CD8-positive, alpha-beta memory T cell (primary cell): ENCODE measurements at regions of chr19 and their contacts with region 1.

Region 1: DNA sequence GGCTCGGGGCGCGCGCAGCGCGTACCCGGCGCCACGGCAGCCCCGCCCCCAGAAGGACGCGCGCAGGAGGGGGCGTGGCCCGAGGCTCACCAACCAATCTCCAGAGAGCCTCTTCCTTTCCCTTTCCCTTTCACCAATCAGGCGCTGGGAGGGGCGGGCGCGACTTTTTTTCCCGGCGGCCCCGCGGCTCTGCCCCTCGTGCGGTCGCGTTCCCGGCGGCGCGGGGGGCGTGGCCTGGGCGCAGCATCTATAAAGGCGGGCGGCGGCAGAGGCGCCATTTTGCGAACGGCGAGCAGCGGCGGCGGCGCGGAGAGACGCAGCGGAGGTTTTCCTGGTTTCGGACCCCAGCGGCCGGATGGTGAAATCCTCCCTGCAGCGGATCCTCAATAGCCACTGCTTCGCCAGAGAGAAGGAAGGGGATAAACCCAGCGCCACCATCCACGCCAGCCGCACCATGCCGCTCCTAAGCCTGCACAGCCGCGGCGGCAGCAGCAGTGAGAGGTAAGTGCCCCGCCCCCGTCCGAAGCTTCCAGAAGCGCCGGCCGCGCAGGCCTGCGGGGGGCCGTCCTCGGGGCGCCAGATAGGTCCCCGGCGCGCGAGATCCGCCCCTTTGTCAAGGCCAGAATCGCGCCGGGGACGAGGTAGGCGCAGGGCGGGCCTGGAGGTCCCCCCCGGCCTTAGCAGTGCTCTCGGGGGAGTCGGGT is 12.6 kb downstream of the PEAK3 start:
- DNase-seq: peak; percentile 97 to 100 (median 99)
- H3K4me3 ChIP-seq: peak overlapping the region; percentile 86
- H3K4me3 Mint-ChIP-seq: peak overlapping the region; percentile 84 to 99 (median 92)
- H3K27ac ChIP-seq: peak overlapping the region; percentile 89
- H3K27ac Mint-ChIP-seq: peak overlapping the region; percentile 86 to 98 (median 90)
- H3K4me1 ChIP-seq: peaks cover 41% of the 10 kb centered on the region
- H3K4me1 Mint-ChIP-seq: peaks cover 27 to 43% (median 28%) of the 10 kb centered on the region in 3 donors
- H3K27me3 ChIP-seq: no peaks in the 10 kb centered on the region
- H3K27me3 Mint-ChIP-seq: peaks cover 0 to 7% of the 10 kb centered on the region in 2 donors

Region 2: DNA sequence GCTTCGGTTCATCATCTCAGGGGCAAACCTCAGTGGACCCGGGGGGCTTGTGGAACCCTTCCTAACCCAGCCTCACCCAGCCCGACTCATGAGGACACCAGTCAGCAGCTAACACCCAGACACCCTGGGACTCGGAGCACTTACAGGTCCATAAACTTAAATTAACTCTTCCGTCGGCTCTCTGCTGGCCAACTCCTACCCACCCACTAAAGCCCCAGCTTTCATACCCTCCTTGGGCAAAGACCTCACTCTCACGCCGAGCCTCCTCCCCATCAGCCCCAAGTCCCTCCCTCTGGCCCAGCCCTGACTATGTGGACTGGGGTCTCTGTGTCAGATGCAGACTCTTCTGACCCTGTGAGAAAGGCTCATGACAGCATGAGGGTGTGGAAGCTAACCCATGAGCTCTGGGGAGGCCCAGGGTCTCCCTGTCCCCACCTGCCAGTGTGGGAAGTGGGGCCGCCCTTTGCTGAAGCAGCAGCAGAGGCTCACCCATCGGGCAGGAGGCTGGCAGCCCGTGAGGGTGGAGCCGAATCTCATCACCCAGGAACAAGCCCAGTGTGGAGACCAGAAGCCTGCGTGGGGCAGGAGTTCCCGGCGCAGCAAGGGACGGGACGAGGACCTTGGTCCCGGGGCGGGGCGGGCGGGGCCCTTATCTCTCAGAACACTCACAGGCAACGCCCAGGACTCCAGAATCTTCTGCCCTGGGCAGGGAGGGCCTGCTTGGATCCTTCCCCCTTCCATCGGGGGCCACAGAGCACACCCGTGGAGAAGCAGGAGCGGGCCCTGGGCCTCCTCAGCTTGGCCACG is 636.7 kb before region 1 on chr19:
- CTCF ChIA-PET with region 1: no interaction called
- POLR2A ChIA-PET with region 1: no interaction called
- DNase-seq: no peak
- H3K4me3 ChIP-seq: no peak overlapping the region
- H3K4me3 Mint-ChIP-seq: no peak overlapping the region
- H3K27ac ChIP-seq: peak overlapping the region; percentile 24
- H3K27ac Mint-ChIP-seq: no peak overlapping the region
- H3K4me1 ChIP-seq: no peaks in the 10 kb centered on the region
- H3K4me1 Mint-ChIP-seq: peaks cover 0 to 3% (median 0%) of the 10 kb centered on the region in 3 donors
- H3K27me3 ChIP-seq: no peaks in the 10 kb centered on the region
- H3K27me3 Mint-ChIP-seq: no peaks in the 10 kb centered on the region

Region 3: GRCh38 chr19:2151339-2152229 is 117.8 kb before region 1 on chr19 and contains the start of gene AP3D1:
- CTCF ChIA-PET with region 1: interaction called, 12 read pairs
- POLR2A ChIA-PET with region 1: interaction called, 5 read pairs
- DNase-seq: peak; percentile 100
- H3K4me3 ChIP-seq: peak within 1 kb of the TSS; percentile 74
- H3K4me3 Mint-ChIP-seq: peak within 1 kb of the TSS; percentile 76 to 96 (median 89)
- H3K27ac ChIP-seq: peak within 1 kb of the TSS; percentile 86
- H3K27ac Mint-ChIP-seq: peak within 1 kb of the TSS; percentile 81 to 97 (median 96)
- H3K4me1 ChIP-seq: peaks cover 30% of the 10 kb centered on the region
- H3K4me1 Mint-ChIP-seq: peaks cover 32 to 39% (median 38%) of the 10 kb centered on the region in 3 donors
- H3K27me3 ChIP-seq: no peaks in the 10 kb centered on the region
- H3K27me3 Mint-ChIP-seq: peaks cover 0 to 3% of the 10 kb centered on the region in 2 donors
- total RNA-seq, gene AP3D1: 96.5 to 99.2 TPM

Region 4: DNA sequence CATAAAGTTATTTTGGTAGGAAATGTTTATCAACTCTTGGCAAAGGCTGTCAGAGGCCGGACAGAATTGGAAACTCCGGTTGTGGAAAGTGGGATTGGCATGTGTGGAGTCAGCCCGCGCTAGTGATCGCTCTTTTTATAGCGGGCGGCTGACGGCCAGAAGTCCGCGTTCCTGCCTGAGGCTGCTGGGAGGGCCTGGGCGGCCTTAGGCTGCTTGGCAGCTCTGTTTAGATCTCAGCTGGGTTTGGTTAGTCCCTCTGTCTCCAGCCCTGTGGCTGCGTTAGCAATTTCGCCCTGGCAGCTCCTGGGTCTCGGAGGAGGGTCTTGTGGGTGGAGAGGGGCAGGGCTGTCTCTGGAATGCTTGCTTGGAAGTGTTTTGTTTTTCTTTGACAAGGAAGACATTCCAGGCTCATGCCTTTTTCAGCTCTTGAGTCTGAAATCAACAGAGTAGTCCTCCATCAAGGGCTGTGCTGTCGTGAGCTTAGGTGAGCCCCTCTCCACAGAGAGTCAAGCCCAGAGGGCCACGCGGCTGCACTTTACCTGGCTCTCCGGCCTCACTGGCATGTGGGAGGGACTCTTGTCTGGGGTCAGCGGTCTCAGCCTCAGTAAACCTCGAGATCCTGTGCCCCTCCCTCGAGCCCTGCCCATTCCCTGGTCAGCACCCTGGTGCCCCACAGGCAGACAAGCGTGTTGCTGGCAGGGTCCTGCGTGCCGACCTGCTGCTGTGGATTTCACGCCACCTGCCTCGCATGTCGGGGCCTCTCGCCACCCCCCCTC is 83.1 kb before region 1 on chr19:
- CTCF ChIA-PET with region 1: no interaction called
- POLR2A ChIA-PET with region 1: no interaction called
- DNase-seq: no peak
- H3K4me3 ChIP-seq: no peak overlapping the region
- H3K4me3 Mint-ChIP-seq: no peak overlapping the region
- H3K27ac ChIP-seq: no peak overlapping the region
- H3K27ac Mint-ChIP-seq: no peak overlapping the region
- H3K4me1 ChIP-seq: no peaks in the 10 kb centered on the region
- H3K4me1 Mint-ChIP-seq: peaks cover 2 to 14% (median 4%) of the 10 kb centered on the region in 3 donors
- H3K27me3 ChIP-seq: no peaks in the 10 kb centered on the region
- H3K27me3 Mint-ChIP-seq: no peaks in the 10 kb centered on the region

Region 5: DNA sequence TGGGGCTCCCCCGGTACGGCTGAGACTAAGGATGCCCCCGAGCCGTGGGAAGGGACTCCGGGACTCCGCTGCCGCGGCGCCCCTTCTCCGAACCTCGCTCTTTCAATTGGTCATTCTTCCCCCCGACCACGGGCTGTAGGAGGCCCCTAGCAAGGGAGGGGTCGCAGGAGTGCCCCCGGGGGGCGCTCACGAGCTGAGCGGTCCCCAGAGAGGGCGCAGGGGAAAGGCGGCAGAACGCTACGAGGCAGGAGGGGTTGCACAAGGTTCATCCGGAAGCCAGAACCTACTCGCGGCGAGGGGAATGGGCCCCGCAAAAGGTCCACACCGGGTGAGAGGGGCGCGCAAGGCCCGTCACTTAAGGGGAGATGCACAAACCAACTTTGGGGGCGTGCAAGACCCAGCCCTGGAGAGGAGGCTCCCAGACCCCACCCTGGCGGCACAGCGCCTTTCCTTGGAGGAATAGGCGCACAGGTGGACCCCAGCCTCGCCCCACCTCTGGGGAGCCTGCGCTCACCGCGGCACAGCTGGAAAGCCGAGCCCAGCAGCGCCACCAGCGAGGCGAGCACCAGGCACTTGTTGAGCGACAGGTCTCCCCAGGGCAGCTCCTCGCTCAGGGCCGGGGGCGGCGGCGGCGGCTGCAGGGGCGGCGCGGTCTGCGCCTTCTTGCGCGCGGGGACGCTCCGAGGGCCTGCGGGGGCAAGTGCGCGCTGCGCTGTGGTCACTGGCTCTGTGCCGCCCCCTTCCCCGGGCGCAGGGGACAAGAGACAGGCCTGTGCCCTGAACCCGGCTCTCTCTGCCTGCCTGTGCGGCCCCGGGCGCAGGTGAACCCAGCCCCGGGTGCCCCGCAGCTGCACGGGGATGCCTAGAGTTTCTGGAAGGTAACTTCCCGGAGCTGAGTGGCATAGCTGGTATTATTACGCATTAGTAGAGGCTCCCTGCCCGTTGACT is 16.0 kb before region 1 on chr19:
- CTCF ChIA-PET with region 1: interaction called, 61 read pairs
- POLR2A ChIA-PET with region 1: interaction called, 73 read pairs
- DNase-seq: peak in 3 of 5 donors; percentile 60 to 71 (median 67)
- H3K4me3 ChIP-seq: peak overlapping the region; percentile 58
- H3K4me3 Mint-ChIP-seq: peak overlapping the region; percentile 72 to 90 (median 79)
- H3K27ac ChIP-seq: no peak overlapping the region
- H3K27ac Mint-ChIP-seq: peak overlapping the region in 6 of 8 donors; percentile 27 to 77 (median 50)
- H3K4me1 ChIP-seq: peaks cover 30% of the 10 kb centered on the region
- H3K4me1 Mint-ChIP-seq: peaks cover 7 to 37% (median 10%) of the 10 kb centered on the region in 3 donors
- H3K27me3 ChIP-seq: peaks cover 10% of the 10 kb centered on the region
- H3K27me3 Mint-ChIP-seq: peaks cover 0 to 2% of the 10 kb centered on the region in 2 donors

Region 6: DNA sequence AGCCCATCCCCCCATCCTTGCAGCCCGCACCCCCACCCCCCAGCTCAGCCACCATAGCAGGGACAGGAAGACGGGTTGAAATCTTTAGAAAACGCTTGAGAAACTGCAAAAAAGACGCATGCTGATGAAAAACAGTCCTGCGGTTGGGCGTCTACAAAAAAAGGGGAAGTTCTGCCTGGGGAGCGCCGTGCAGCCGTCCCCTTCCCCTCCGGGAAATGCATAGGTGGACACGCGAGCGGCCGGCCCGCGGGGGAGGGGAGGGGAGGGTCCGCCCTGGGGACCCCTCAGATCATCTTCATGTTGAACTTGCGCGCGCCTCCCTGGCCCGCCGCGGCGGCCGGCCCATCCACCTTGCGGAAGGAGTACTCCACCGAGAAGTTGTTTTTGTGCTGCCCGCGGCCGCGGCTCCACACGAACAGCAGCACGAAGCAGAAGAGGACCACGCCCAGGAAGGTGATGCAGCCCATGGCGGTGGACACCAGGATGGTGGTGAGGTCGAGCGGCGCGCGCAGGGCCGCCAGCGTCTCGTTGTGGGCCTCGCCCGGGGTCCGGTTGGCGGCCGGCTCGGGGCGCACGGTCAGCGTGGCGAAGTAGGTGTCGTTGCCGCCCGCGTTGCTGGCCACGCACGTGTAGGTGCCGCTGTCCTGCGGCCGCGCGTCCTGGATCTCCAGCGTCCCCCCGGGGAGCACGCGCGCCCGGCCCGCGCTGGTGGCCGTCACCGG is 20.5 kb after region 1 on chr19:
- CTCF ChIA-PET with region 1: interaction called, 33 read pairs
- POLR2A ChIA-PET with region 1: interaction called, 10 read pairs
- DNase-seq: peak in 3 of 5 donors; percentile 59 to 79 (median 68)
- H3K4me3 ChIP-seq: peak overlapping the region; percentile 81
- H3K4me3 Mint-ChIP-seq: peak overlapping the region; percentile 86 to 95 (median 89)
- H3K27ac ChIP-seq: peak overlapping the region; percentile 36
- H3K27ac Mint-ChIP-seq: peak overlapping the region in 6 of 8 donors; percentile 58 to 83 (median 73)
- H3K4me1 ChIP-seq: peaks cover 18% of the 10 kb centered on the region
- H3K4me1 Mint-ChIP-seq: peaks cover 16 to 41% (median 21%) of the 10 kb centered on the region in 3 donors
- H3K27me3 ChIP-seq: no peaks in the 10 kb centered on the region
- H3K27me3 Mint-ChIP-seq: peaks cover 0 to 12% of the 10 kb centered on the region in 2 donors

Region 7: GRCh38 chr19:2359992-2360685 is 90.7 kb after region 1 on chr19 and contains the start of gene TMPRSS9:
- CTCF ChIA-PET with region 1: no interaction called
- POLR2A ChIA-PET with region 1: no interaction called
- DNase-seq: no peak
- H3K4me3 ChIP-seq: no peak within 1 kb of the TSS
- H3K4me3 Mint-ChIP-seq: peak within 1 kb of the TSS in 1 of 7 donors; percentile 80
- H3K27ac ChIP-seq: no peak within 1 kb of the TSS
- H3K27ac Mint-ChIP-seq: peak within 1 kb of the TSS in 2 of 8 donors; percentile 27 to 47
- H3K4me1 ChIP-seq: no peaks in the 10 kb centered on the region
- H3K4me1 Mint-ChIP-seq: peaks cover 0 to 3% (median 0%) of the 10 kb centered on the region in 3 donors
- H3K27me3 ChIP-seq: peaks cover 11% of the 10 kb centered on the region
- H3K27me3 Mint-ChIP-seq: peaks cover 12 to 17% of the 10 kb centered on the region in 2 donors
- total RNA-seq, gene TMPRSS9: not detected

Region 8: DNA sequence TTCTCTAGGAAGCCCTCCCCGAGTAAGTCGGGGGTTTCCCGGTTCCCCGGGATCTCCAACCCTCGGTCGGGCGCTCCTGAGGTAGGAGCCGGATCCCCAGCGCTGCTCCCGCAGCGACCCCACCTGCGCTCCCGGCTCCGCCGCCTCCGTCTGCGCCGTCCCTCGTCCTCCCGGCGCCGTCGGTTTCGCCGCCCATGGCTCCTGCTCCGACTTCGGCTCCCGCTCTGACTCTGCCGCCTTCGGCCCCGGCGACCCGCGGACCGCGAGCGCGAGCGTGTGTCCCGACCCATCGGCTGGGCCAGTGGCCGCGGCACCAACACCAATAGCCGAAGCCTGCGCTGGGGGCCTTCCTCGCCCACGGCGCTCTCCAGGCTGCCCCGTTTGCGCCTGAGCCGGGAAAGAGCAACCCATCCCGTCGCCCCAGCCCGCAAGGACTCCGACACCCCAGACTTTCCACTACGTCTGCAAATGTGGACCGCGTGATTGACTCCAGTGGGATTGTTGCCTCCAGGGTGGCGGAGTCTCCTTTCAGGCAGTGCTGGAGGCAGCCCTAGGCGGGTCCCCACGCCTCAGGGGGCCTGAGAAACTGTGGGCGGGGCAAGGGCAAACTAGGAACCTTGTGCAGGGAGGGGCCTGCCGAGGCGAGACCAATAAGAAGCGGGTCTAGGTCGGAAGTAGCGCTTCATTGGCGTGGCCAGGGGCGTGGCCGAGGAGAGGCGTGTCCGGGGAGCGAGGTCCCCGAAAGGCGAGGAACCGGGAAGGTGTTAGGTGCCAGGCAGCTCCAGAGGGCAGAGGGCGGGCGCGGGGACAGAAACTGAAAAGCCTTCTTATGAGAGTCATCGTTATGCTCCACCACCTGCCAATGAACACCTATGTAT is 1357.3 kb after region 1 on chr19 and contains the start of gene CACTIN:
- CTCF ChIA-PET with region 1: no interaction called
- POLR2A ChIA-PET with region 1: interaction called, 11 read pairs
- DNase-seq: peak; percentile 98 to 99 (median 99)
- H3K4me3 ChIP-seq: peak within 1 kb of the TSS; percentile 87
- H3K4me3 Mint-ChIP-seq: peak within 1 kb of the TSS; percentile 78 to 99 (median 96)
- H3K27ac ChIP-seq: peak within 1 kb of the TSS; percentile 77
- H3K27ac Mint-ChIP-seq: peak within 1 kb of the TSS; percentile 91 to 100 (median 98)
- H3K4me1 ChIP-seq: peaks cover 20% of the 10 kb centered on the region
- H3K4me1 Mint-ChIP-seq: peaks cover 26 to 36% (median 36%) of the 10 kb centered on the region in 3 donors
- H3K27me3 ChIP-seq: no peaks in the 10 kb centered on the region
- H3K27me3 Mint-ChIP-seq: no peaks in the 10 kb centered on the region
- total RNA-seq, gene CACTIN: 37.2 to 39.5 TPM